GM12878 (cell line): ENCODE measurements at regions of chr1 and their contacts with region 1.

Region 1: DNA sequence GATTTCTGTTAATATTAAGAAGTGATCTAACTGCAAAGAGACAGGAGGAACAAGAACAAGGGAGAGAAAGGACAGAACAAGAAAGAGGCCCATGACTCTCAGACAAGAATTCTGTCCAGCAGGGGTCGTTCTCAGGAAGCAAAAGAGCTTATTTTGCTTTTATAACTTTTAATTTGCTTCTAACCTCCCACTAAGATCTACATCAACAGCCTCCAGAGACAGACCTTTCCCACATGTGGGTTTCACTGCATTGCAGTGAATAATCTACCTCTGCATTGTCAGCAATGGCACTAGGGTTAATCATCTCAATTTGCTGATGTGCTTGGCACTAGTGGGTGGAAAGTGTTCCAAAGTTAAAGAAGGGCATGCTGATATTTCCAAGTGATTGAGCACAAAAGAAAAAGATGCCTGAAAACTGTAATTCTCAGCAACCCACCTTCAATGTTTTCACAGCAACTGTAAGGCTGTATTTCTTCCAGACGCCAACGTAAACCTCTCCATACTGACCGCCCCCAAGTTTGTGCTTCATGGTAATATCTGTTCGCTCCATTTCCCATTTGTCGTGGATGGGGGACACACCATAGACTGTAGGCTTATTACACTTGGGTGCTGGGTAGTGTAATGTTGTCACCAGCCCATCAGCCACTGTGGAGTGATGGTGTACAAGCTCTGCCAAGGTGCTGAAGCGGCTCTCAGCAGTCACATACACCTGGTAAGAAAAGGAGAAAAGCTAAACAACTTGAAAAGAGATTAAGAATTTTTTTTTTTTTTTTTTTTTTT is 39.5 kb downstream of the TOR3A start:
- DNase-seq: no peak
- ATAC-seq: peak; percentile 67
- H3K4me3 ChIP-seq: no peak overlapping the region
- H3K27ac ChIP-seq: no peak overlapping the region
- H3K4me1 ChIP-seq: no peaks in the 10 kb centered on the region
- H3K27me3 ChIP-seq: no peaks in the 10 kb centered on the region
- CTCF ChIP-seq: peak; percentile 58 to 62 (median 61)
- EP300 ChIP-seq: no peak
- POLR2A ChIP-seq: no peak
- RAD21 ChIP-seq: peak; percentile 79

Region 2: GRCh38 chr1:177975588-177976495 is 1145.5 kb before region 1 on chr1:
- CTCF ChIA-PET with region 1: no interaction called
- POLR2A ChIA-PET with region 1: no interaction called
- RAD21 ChIA-PET with region 1: no interaction called
- SMC1A ChIA-PET with region 1: no interaction called
- in situ Hi-C with region 1: no loop called
- intact Hi-C with region 1: no loop called
- DNase-seq: no peak
- ATAC-seq: no peak
- H3K4me3 ChIP-seq: no peak overlapping the region
- H3K27ac ChIP-seq: no peak overlapping the region
- H3K4me1 ChIP-seq: no peaks in the 10 kb centered on the region
- H3K27me3 ChIP-seq: no peaks in the 10 kb centered on the region
- CTCF ChIP-seq: no peak
- EP300 ChIP-seq: no peak
- POLR2A ChIP-seq: no peak
- RAD21 ChIP-seq: no peak

Region 3: DNA sequence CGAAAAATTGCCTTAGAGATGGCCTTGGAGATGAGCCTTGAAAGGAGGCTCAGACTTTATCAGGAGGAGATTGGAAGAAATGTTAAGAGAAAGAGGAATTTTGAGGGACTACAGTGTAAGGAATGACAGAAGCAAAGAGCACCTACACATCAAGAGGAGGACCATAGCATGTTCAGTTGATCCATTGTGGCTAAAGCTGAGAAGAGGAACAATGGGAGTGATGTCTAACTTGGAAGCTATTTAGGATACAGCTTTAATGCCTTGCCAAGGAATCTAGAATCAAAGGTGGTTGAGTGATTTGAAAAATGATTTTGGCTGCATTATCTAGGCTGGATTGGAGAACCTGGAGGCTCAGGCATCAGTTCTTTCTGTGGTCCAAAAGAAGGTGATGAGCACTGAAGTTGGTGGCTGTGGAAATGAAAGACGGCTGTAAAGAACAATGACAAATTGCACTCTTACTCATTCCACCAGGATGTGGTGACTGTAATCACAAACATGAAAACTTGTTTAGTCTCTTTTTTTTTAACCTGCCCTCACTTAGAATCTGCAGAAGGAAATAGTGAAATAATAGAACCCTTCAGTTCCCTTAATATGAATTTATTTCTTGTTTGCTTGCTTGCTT is 84.4 kb before region 1 on chr1:
- CTCF ChIA-PET with region 1: no interaction called
- POLR2A ChIA-PET with region 1: no interaction called
- RAD21 ChIA-PET with region 1: no interaction called
- SMC1A ChIA-PET with region 1: no interaction called
- in situ Hi-C with region 1: no loop called
- intact Hi-C with region 1: no loop called
- DNase-seq: peak; percentile 43
- ATAC-seq: peak; percentile 63
- H3K4me3 ChIP-seq: no peak overlapping the region
- H3K27ac ChIP-seq: peak overlapping the region; percentile 13; the same call in 1 of the 2 replicates
- H3K4me1 ChIP-seq: peaks cover 54% of the 10 kb centered on the region
- H3K27me3 ChIP-seq: no peaks in the 10 kb centered on the region
- CTCF ChIP-seq: no peak
- EP300 ChIP-seq: 0 out of 4 replicates have a peak, but pooled peaks of 1 of the 2 experiments have one; percentile 26
- POLR2A ChIP-seq: no peak
- RAD21 ChIP-seq: no peak

Region 4: GRCh38 chr1:179047636-179047997 is 73.7 kb before region 1 on chr1:
- CTCF ChIA-PET with region 1: no interaction called
- POLR2A ChIA-PET with region 1: no interaction called
- RAD21 ChIA-PET with region 1: no interaction called
- SMC1A ChIA-PET with region 1: no interaction called
- in situ Hi-C with region 1: no loop called
- intact Hi-C with region 1: no loop called
- DNase-seq: no peak
- ATAC-seq: no peak
- H3K4me3 ChIP-seq: no peak overlapping the region
- H3K27ac ChIP-seq: no peak overlapping the region
- H3K4me1 ChIP-seq: peaks cover 3% of the 10 kb centered on the region; the same call in 1 of the 2 replicates
- H3K27me3 ChIP-seq: no peaks in the 10 kb centered on the region
- CTCF ChIP-seq: no peak
- EP300 ChIP-seq: no peak
- POLR2A ChIP-seq: no peak
- RAD21 ChIP-seq: no peak

Region 5: DNA sequence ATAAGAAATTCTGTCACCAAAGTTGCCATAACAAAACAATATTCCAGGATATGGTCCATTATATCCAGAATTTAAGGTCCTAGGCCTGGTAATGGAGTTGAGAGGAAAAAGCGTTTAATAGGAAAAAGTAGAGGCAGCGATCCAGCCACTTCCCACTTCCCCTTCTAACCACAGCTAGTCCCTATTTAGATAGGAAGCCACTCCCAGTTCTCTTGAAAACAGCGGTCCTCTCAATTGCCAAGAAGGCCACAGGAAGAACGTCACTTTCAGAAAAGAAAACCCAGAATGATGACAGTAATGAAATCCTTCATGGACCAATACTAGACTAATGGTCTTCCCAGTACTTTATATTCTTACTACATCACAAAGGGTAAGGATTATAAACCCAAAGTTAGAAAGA is 69.5 kb after region 1 on chr1:
- CTCF ChIA-PET with region 1: interaction called, 30 read pairs
- POLR2A ChIA-PET with region 1: no interaction called
- RAD21 ChIA-PET with region 1: interaction called, 4 read pairs
- SMC1A ChIA-PET with region 1: interaction called, 8 read pairs
- in situ Hi-C with region 1: no loop called
- intact Hi-C with region 1: loop called (anchors 1 kb)
- DNase-seq: no peak
- ATAC-seq: no peak; the same call in 2 of the 3 replicates
- H3K4me3 ChIP-seq: no peak overlapping the region
- H3K27ac ChIP-seq: no peak overlapping the region
- H3K4me1 ChIP-seq: peaks cover 4% of the 10 kb centered on the region; the same call in 1 of the 2 replicates
- H3K27me3 ChIP-seq: no peaks in the 10 kb centered on the region
- CTCF ChIP-seq: no peak
- EP300 ChIP-seq: no peak
- POLR2A ChIP-seq: no peak
- RAD21 ChIP-seq: no peak

Region 6: GRCh38 chr1:179251675-179252074 is 130.3 kb after region 1 on chr1:
- CTCF ChIA-PET with region 1: interaction called, 8 read pairs
- POLR2A ChIA-PET with region 1: no interaction called
- RAD21 ChIA-PET with region 1: interaction called, 5 read pairs
- SMC1A ChIA-PET with region 1: interaction called, 11 read pairs
- in situ Hi-C with region 1: no loop called
- intact Hi-C with region 1: no loop called
- DNase-seq: no peak
- ATAC-seq: peak; percentile 57
- H3K4me3 ChIP-seq: no peak overlapping the region
- H3K27ac ChIP-seq: no peak overlapping the region
- H3K4me1 ChIP-seq: no peaks in the 10 kb centered on the region
- H3K27me3 ChIP-seq: no peaks in the 10 kb centered on the region
- CTCF ChIP-seq: peak; percentile 16 to 47 (median 24); a peak in 3 of 6 replicates
- EP300 ChIP-seq: no peak
- POLR2A ChIP-seq: no peak
- RAD21 ChIP-seq: peak; percentile 53